Sciatic nerve (tissue), 2 donors: ENCODE measurements at regions of chr6 and their contacts with region 1.

Region 1: DNA sequence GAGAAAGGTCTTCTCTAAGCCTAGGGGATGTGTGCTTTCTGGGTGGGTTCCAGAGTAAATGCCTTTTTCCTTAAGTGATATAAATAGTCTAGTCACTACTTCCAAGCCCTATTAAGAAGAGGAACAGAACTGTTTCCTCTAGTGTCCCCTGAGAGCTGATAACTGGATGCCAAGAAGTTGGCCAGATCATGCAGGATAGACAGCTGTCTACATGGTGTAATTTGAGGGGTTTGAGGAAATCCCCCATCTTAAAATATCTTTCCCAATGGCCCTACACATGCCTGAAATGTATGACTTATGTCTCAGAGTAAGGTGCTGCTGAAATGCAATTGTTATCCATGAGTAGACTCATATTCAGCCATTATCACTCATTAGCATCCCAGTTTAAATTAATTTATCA is 20.2 kb upstream of the PIM1 start:
- DNase-seq: no peak
- ATAC-seq: no peak

Region 2: DNA sequence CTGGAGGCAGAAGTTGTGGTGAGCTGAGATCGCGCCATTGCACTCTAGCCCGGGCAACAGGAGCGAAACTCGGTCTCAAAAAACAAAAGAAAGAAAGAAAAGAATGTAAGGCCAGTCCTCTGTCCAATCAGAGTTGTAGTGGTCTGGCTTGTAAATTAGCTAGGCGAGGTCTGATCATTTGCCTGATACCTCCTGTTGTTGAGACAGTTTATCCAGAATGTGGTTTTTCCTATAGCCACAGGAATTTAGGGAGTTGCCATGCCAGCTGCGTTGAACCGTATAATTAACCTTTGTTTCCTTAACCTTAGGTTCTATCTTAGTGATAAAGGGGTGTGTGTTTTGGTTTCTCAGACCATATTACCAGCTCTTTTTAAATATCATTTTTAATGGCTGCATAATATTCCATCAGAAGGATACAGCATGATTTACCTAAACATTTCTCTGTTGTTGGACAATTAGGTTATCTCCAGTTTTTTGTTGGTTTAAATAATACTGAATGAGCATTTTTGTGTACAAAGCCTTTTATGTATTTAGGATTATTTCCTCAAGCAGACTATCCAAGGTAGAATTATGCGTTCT is 1819.1 kb before region 1 on chr6:
- intact Hi-C with region 1: loop called (anchors 5 kb)
- DNase-seq: no peak
- ATAC-seq: no peak

Region 3: GRCh38 chr6:35419417-35419816 is 1730.3 kb before region 1 on chr6:
- intact Hi-C with region 1: no loop called
- DNase-seq: no peak
- ATAC-seq: no peak

Region 4: GRCh38 chr6:37499433-37500293 is 349.9 kb after region 1 on chr6 and contains the start of gene CCDC167:
- intact Hi-C with region 1: no loop called
- DNase-seq: peak; percentile 95
- ATAC-seq: peak; percentile 99
- total RNA-seq, gene CCDC167: 10.4 TPM